ENCODE measurements at regions of chr10 and their contacts with region 1.

Region 1: DNA sequence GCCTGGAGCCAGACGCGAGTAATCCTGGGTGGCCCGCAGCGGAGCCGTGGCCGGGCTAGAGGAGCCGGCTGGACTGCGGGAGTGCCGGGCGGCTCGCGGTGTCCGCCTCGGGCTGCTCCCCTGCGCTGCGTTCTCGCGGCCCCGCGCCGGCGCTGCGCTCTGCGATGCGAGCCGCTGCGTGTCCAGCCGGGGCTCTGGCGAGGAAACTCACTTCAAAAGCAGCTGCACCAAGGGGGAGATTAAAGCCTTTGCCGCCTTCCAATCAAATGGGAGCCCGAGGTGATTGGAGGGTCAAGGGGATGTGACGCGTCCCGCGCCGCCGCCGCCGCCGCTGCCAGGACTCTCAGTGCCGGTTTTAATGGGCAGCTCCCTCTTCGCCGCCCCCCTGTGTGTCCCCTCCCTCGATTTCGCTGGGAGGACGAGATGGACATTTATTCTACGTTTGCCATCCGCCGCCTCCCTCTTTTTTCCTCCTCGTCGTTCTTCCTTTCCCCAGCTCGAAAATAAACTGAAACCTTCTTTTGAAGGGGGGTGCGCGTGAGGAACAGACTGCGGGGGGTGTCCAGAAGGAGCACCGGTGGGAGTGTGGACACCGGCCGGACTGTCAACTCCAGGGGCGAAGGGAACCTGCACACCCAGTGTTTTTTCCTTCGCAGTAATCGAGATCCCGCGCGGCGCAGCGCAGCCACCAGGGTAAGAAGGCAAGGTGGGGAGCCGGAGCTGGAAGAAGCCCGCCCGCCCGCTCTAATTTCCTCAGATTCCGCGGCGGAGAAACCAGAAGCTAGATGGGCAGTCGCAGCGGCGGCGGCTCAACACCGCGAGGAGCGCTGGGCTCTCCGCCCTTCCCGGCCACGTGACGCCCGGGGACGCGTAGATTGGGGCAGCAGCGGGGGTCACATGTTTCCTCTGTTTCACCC is at the start of gene ZNF503:
- DNase-seq: peak; percentile 97 to 99 (median 98)
- ATAC-seq: peak; percentile 83 to 92 (median 88)
- H3K4me3 ChIP-seq: peak within 1 kb of the TSS; percentile 74 to 98 (median 92)
- H3K27ac ChIP-seq: peak within 1 kb of the TSS; percentile 81 to 100 (median 97)
- H3K4me1 ChIP-seq: peaks cover 0 to 53% (median 20%) of the 10 kb centered on the region in 12 donors
- H3K27me3 ChIP-seq: peaks cover 0 to 38% (median 0%) of the 10 kb centered on the region in 9 donors
- CTCF ChIP-seq: peak in 7 of 12 donors; percentile 10 to 40 (median 32)
- POLR2A ChIP-seq: peak; percentile 63 to 99
- total RNA-seq, gene ZNF503: 3.4 to 8.6 (median 7.4) TPM

Region 2: GRCh38 chr10:74384615-74385183 is 1017.1 kb before region 1 on chr10:
- intact Hi-C with region 1: no loop called
- DNase-seq: no peak
- ATAC-seq: no peak
- H3K4me3 ChIP-seq: no peak overlapping the region
- H3K27ac ChIP-seq: no peak overlapping the region
- H3K4me1 ChIP-seq: no peaks in the 10 kb centered on the region
- H3K27me3 ChIP-seq: no peaks in the 10 kb centered on the region
- CTCF ChIP-seq: no peak
- POLR2A ChIP-seq: no peak

Region 3: GRCh38 chr10:75513292-75513885 is 111.6 kb after region 1 on chr10:
- intact Hi-C with region 1: no loop called
- DNase-seq: peak in 2 of 5 donors; percentile 11 to 29
- ATAC-seq: no peak
- H3K4me3 ChIP-seq: no peak overlapping the region
- H3K27ac ChIP-seq: no peak overlapping the region
- H3K4me1 ChIP-seq: peaks cover 0 to 25% (median 5%) of the 10 kb centered on the region in 12 donors
- H3K27me3 ChIP-seq: no peaks in the 10 kb centered on the region
- CTCF ChIP-seq: no peak
- POLR2A ChIP-seq: no peak

Region 4: GRCh38 chr10:75547391-75548298 is 145.8 kb after region 1 on chr10:
- intact Hi-C with region 1: loop called in 3 of 10 experiments (anchors 5 to 10 kb)
- DNase-seq: no peak
- ATAC-seq: no peak
- H3K4me3 ChIP-seq: no peak overlapping the region
- H3K27ac ChIP-seq: peak overlapping the region in 5 of 12 donors; percentile 18 to 35 (median 19)
- H3K4me1 ChIP-seq: peaks cover 0 to 40% (median 15%) of the 10 kb centered on the region in 12 donors
- H3K27me3 ChIP-seq: no peaks in the 10 kb centered on the region
- CTCF ChIP-seq: no peak
- POLR2A ChIP-seq: no peak

Region 5: GRCh38 chr10:75662715-75663114 is 260.9 kb after region 1 on chr10:
- intact Hi-C with region 1: loop called in 5 of 10 experiments (anchors 5 to 10 kb)
- DNase-seq: peak in 4 of 5 donors; percentile 37 to 56 (median 44)
- ATAC-seq: peak; percentile 51 to 93 (median 88)
- H3K4me3 ChIP-seq: no peak overlapping the region
- H3K27ac ChIP-seq: peak overlapping the region; percentile 4 to 76 (median 47)
- H3K4me1 ChIP-seq: peaks cover 0 to 29% (median 7%) of the 10 kb centered on the region in 12 donors
- H3K27me3 ChIP-seq: no peaks in the 10 kb centered on the region
- CTCF ChIP-seq: no peak
- POLR2A ChIP-seq: no peak

Region 6: GRCh38 chr10:75922435-75922834 is 520.6 kb after region 1 on chr10:
- intact Hi-C with region 1: loop called in 2 of 10 experiments (anchors 5 to 10 kb)
- DNase-seq: no peak
- ATAC-seq: no peak
- H3K4me3 ChIP-seq: no peak overlapping the region
- H3K27ac ChIP-seq: no peak overlapping the region
- H3K4me1 ChIP-seq: peaks cover 0 to 16% (median 5%) of the 10 kb centered on the region in 12 donors
- H3K27me3 ChIP-seq: no peaks in the 10 kb centered on the region
- CTCF ChIP-seq: peak in 6 of 12 donors; percentile 7 to 23 (median 14)
- POLR2A ChIP-seq: no peak

Region 7: GRCh38 chr10:76444034-76444800 is 1042.4 kb after region 1 on chr10:
- intact Hi-C with region 1: loop called in 4 of 10 experiments (anchors 10 kb)
- DNase-seq: peak in 3 of 5 donors; percentile 15 to 59 (median 42)
- ATAC-seq: peak; percentile 79 to 96 (median 90)
- H3K4me3 ChIP-seq: peak overlapping the region in 1 of 12 donors; percentile 21
- H3K27ac ChIP-seq: peak overlapping the region in 9 of 12 donors; percentile 6 to 80 (median 55)
- H3K4me1 ChIP-seq: peaks cover 0 to 25% (median 14%) of the 10 kb centered on the region in 12 donors
- H3K27me3 ChIP-seq: no peaks in the 10 kb centered on the region
- CTCF ChIP-seq: no peak
- POLR2A ChIP-seq: no peak

Region 8: DNA sequence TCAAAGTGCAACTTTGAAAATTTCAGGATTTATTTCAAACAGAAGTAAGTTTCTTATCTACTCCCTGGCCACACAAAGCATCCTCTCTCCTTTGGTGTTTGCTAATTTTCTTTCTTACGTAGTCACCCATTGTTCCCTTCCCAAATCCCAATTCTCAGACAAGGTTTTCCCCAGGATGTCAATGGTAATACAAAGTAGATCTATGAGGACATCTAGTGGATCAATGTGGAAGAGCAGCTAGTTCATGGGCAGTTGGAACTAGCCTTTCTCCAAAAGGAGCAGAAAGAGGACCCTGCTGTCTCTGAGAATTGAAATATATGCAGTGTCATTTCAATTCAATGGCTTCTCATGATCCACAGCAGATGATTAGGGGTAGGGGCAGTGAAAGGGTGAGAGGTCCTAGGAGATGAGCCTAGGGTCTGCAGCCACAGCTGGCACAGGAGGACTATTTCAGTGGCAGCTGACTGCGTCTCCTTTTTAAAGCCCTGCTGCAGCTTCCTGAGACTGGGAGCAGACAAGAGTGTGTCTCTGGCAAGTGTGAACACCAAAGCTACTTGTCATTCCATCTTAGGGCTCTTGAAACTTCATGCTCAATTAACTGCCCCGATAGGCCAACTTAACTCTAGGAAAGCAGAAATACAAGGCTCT is 1603.2 kb after region 1 on chr10:
- intact Hi-C with region 1: loop called in 4 of 10 experiments (anchors 2 to 10 kb)
- DNase-seq: peak in 1 of 5 donors; percentile 14
- ATAC-seq: peak in 3 of 4 donors; percentile 58 to 77 (median 75)
- H3K4me3 ChIP-seq: no peak overlapping the region
- H3K27ac ChIP-seq: peak overlapping the region in 2 of 12 donors; percentile 5 to 57
- H3K4me1 ChIP-seq: peaks cover 0 to 9% (median 0%) of the 10 kb centered on the region in 12 donors
- H3K27me3 ChIP-seq: peaks cover 0 to 4% (median 0%) of the 10 kb centered on the region in 9 donors
- CTCF ChIP-seq: peak; percentile 61 to 88 (median 78)
- POLR2A ChIP-seq: no peak